ENCODE measurements at regions of chr16 and their contacts with region 1.

Region 1: GRCh38 chr16:46689365-46690280 is at the start of gene ORC6:
- DNase-seq: peak; percentile 91
- ATAC-seq: peak; percentile 75
- H3K4me3 Mint-ChIP-seq: no peak within 1 kb of the TSS
- H3K27ac Mint-ChIP-seq: no peak within 1 kb of the TSS
- H3K4me1 Mint-ChIP-seq: peaks cover 32% of the 10 kb centered on the region
- H3K27me3 Mint-ChIP-seq: no peaks in the 10 kb centered on the region
- CTCF ChIP-seq: no peak
- total RNA-seq, gene ORC6: 8.0 and 13.2 TPM in 2 replicates

Region 2: GRCh38 chr16:46673320-46674013 is 16.2 kb before region 1 on chr16:
- CTCF ChIA-PET with region 1: interaction called, 11 read pairs
- POLR2A ChIA-PET with region 1: interaction called, 3 read pairs
- intact Hi-C with region 1: loop called (anchors 1 kb)
- DNase-seq: no peak
- ATAC-seq: peak; percentile 92
- H3K4me3 Mint-ChIP-seq: no peak overlapping the region
- H3K27ac Mint-ChIP-seq: no peak overlapping the region
- H3K4me1 Mint-ChIP-seq: no peaks in the 10 kb centered on the region
- H3K27me3 Mint-ChIP-seq: no peaks in the 10 kb centered on the region
- CTCF ChIP-seq: peak; percentile 37

Region 3: GRCh38 chr16:46808997-46809396 is 119.4 kb after region 1 on chr16:
- CTCF ChIA-PET with region 1: no interaction called
- POLR2A ChIA-PET with region 1: interaction called, 6 read pairs
- intact Hi-C with region 1: loop called (anchors 5 kb)
- DNase-seq: no peak
- ATAC-seq: peak; percentile 92
- H3K4me3 Mint-ChIP-seq: no peak overlapping the region
- H3K27ac Mint-ChIP-seq: no peak overlapping the region
- H3K4me1 Mint-ChIP-seq: peaks cover 16% of the 10 kb centered on the region
- H3K27me3 Mint-ChIP-seq: no peaks in the 10 kb centered on the region
- CTCF ChIP-seq: no peak

Region 4: DNA sequence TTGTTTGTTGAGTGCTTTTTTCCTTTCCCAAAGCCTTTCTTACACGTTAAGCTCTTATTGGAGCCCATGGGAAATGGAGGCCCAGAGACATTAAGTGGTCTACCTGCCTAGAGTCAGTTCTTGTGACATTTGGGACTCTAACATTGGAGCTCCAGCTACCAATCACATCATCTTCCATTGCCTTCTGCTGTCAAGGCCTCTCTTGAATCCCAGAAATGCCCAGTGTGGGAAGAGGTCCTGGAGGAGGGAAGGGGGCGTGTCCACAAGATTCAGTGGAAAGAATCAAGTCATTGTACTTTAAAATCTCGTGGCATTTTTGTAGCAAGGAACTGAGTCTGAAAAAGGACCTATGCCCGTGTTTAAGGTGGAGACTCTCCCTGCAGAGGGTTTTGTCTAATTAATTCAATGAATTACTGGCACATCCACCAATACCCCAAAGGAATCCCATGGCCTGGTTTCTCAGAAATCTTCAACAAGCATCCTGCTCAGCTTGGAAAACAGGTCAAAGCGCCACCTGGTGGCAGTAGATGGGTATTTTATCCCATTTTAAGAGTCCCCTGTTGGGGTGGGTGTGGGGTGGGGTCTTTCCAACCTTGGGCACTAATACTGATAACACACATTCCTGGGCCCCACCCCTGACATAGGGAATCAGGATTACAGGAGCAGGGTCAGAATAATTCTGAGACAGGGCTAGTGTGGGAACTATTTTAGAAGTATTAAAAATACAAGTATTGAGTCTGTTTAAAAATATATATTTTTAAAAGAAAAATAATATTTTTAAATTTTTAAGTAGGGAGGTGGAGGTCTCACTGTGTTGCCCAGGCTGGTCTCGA is 219.1 kb after region 1 on chr16:
- CTCF ChIA-PET with region 1: no interaction called
- POLR2A ChIA-PET with region 1: no interaction called
- intact Hi-C with region 1: loop called (anchors 2 kb)
- DNase-seq: peak; percentile 33
- ATAC-seq: peak; percentile 30
- H3K4me3 Mint-ChIP-seq: no peak overlapping the region
- H3K27ac Mint-ChIP-seq: no peak overlapping the region
- H3K4me1 Mint-ChIP-seq: peaks cover 56% of the 10 kb centered on the region
- H3K27me3 Mint-ChIP-seq: no peaks in the 10 kb centered on the region
- CTCF ChIP-seq: peak; percentile 77

Region 5: DNA sequence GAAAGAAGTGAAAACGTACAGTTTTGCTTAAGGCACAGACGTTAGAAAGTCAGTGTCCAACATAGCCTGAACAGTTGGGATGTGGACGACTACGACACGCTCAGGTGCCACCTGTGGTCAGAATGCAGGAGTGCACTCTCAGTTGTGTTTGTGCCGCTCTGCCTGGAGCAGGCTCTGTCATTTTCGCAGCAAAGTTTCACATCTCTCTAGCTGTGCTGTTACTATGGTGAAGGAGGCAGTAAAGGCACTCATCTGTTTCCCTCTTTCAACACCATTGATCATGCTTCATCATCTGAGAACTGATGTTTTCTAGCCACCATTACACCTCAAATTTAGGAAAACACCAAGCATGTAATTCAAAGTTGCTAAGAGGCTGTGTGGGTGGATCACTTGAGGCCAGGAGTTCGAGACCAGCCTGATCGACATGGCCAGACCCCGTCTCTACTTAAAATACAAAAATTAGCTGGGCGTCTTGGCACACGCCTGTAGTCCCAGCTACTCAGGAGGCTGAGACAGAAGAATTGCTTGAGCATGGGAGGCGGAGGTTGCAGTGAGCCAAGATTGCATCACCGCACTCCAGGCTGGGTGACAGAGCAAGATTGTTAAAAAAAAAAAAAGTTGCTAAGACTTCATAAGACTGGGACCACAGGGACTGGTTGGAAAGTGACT is 328.7 kb after region 1 on chr16:
- CTCF ChIA-PET with region 1: no interaction called
- POLR2A ChIA-PET with region 1: no interaction called
- intact Hi-C with region 1: loop called (anchors 5 kb)
- DNase-seq: peak; percentile 39
- ATAC-seq: peak; percentile 98
- H3K4me3 Mint-ChIP-seq: peak overlapping the region; percentile 13
- H3K27ac Mint-ChIP-seq: peak overlapping the region; percentile 73
- H3K4me1 Mint-ChIP-seq: peaks cover 28% of the 10 kb centered on the region
- H3K27me3 Mint-ChIP-seq: no peaks in the 10 kb centered on the region
- CTCF ChIP-seq: no peak

Measured in activated B cell treated with CpG ODN at 0.5 μM for 24 hours (primary cell).